ENCODE measurements at regions of chr17 and their contacts with region 1.

Region 1: DNA sequence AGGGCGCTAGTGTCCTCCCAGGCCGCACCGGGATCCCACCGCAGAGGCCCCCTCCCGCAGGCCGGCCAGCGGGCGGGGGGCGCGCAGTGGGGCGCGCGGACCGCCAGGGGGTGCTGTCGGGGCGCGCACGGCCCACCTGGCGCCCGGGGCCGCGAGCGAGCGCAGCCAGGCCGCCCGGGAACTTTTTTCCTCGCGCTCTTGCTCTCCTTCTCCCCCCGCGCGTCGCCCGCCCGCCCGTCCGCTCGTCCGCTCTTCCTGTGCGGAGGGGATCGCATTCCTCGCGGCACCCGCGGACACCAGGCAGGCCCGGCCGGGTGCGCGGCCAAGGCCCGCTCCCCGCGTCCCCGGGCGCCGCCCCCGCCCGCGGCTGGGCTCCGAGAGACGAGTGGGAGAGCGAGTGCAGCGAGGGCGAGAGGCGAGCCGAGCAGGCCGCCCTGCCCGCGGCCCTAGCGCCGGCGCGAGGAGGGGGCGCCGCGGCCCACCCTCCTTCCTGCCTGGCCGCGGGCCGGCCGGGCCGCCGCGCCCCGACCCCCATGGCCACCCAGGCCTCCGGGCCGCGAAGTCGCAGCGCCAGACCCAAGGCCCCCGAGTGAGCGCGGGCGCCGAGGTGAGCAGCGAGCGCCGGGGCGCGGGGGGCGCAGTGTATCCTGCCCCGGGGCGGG is at the start of gene RAI1:
- ATAC-seq: peak; percentile 47 to 75 (median 54)
- H3K4me3 ChIP-seq: peak within 1 kb of the TSS; percentile 62 to 93 (median 79)
- H3K27ac ChIP-seq: peak within 1 kb of the TSS; percentile 92 to 97
- H3K4me1 ChIP-seq: peaks cover 26 to 30% of the 10 kb centered on the region in 2 donors
- total RNA-seq, gene RAI1: 5.4 to 32.0 (median 20.4) TPM

Region 2: GRCh38 chr17:17774009-17774881 is 92.9 kb after region 1 on chr17:
- in situ Hi-C with region 1: loop called in 1 of 9 experiments (anchors 10 kb)
- ATAC-seq: peak in 3 of 8 experiments; percentile 12 to 41 (median 31)
- H3K4me3 ChIP-seq: no peak overlapping the region
- H3K27ac ChIP-seq: peak overlapping the region in 1 of 2 donors; percentile 14
- H3K4me1 ChIP-seq: peaks cover 39 to 46% of the 10 kb centered on the region in 2 donors

Region 3: GRCh38 chr17:17859909-17860765 is 178.8 kb after region 1 on chr17:
- in situ Hi-C with region 1: loop called in 2 of 9 experiments (anchors 25 kb)
- ATAC-seq: peak; percentile 72 to 93 (median 87)
- H3K4me3 ChIP-seq: no peak overlapping the region
- H3K27ac ChIP-seq: no peak overlapping the region
- H3K4me1 ChIP-seq: peaks cover 7 to 11% of the 10 kb centered on the region in 2 donors

Region 4: GRCh38 chr17:18004884-18005305 is 323.6 kb after region 1 on chr17:
- in situ Hi-C with region 1: loop called in 1 of 9 experiments (anchors 25 kb)
- ATAC-seq: peak in 6 of 8 experiments; percentile 51 to 95 (median 90)
- H3K4me3 ChIP-seq: no peak overlapping the region
- H3K27ac ChIP-seq: peak overlapping the region in 1 of 2 donors; percentile 67
- H3K4me1 ChIP-seq: peaks cover 15 to 19% of the 10 kb centered on the region in 2 donors

Region 5: GRCh38 chr17:18038861-18039534 is 357.7 kb after region 1 on chr17 and contains the starts of genes ATPAF2 and GID4:
- in situ Hi-C with region 1: loop called in 4 of 9 experiments (anchors 25 kb)
- ATAC-seq: peak; percentile 86 to 93 (median 90)
- H3K4me3 ChIP-seq: peak within 1 kb of the TSS; percentile 52 to 82 (median 57)
- H3K27ac ChIP-seq: peak within 1 kb of the TSS; percentile 44 to 65
- H3K4me1 ChIP-seq: peaks cover 13 to 16% of the 10 kb centered on the region in 2 donors
- total RNA-seq, gene ATPAF2: 12.7 to 38.9 (median 23.2) TPM
- total RNA-seq, gene GID4: 6.0 to 13.0 (median 8.2) TPM